ENCODE measurements at regions of chr9 and their contacts with region 1.

Region 1: DNA sequence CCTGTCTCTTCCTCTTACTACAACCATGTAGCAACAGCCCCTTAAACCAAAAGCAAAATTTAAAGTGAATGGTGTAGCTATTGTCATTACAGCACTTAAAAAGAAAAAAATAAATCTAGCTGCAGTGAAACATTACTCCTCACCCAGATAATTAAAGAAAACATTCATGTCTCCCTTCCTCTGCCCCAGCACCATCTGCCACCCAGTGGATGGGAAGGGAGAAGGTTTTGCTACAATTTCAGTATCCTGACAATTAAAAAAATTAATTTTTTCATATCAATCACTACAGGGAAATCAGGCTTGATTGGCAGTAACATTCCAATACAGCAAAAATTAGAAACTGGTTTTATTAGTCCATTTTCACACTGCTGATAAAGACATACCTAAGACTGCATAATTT is 147.4 kb upstream of the PUM3 start:
- DNase-seq: no peak
- H3K4me3 ChIP-seq: no peak overlapping the region
- H3K27ac ChIP-seq: no peak overlapping the region
- H3K4me1 ChIP-seq: no peaks in the 10 kb centered on the region
- H3K27me3 ChIP-seq: no peaks in the 10 kb centered on the region
- CTCF ChIP-seq: peak; percentile 30; the same call in 1 of the 2 replicates

Region 2: DNA sequence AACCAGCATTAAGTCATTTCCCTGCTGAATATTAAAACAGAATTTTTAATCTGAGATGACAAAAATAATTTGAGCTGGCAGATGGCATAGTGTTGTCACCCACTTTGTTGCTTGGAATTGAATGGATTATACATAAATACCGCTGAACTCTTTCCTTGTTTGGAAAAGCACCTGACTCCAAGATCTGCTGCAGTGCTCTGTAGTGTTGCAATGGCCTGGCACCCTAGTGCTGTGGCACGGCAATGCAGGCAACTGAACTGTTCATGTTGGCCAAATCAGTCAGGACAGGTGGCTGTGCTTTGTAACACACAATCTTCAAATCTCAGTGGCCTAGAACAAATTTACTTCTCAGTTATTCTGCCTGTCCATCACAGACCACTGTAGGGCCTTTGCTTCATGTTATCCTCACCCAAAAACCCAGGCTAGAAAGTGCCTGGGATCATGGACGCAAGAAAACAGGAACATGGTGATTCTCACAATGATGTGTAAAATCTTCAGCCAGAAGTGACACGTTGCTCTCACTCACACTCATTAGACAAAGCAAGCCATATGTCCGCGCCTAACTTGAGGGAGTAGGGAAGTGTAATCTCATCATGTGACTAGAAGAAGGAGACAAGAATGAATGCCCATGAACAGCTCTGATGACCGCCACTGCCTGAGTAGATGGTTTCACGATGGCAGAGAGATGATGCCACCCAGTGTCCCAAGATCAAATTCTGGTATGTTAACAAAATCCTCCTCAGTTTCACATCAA is 44.5 kb after region 1 on chr9:
- CTCF ChIA-PET with region 1: no interaction called
- POLR2A ChIA-PET with region 1: no interaction called
- intact Hi-C with region 1: loop called (anchors 2 kb)
- DNase-seq: no peak
- H3K4me3 ChIP-seq: no peak overlapping the region
- H3K27ac ChIP-seq: no peak overlapping the region
- H3K4me1 ChIP-seq: no peaks in the 10 kb centered on the region
- H3K27me3 ChIP-seq: no peaks in the 10 kb centered on the region
- CTCF ChIP-seq: no peak

Measured in A673 (cell line).